Activated naive CD4-positive, alpha-beta T cell treated with anti-CD3 and anti-CD28 coated beads, Interleukin-2, amount 10 ng/mL, durations not matched to agents 7 days and 5 days (primary cell): ENCODE measurements at regions of chr12 and their contacts with region 1.

Region 1: GRCh38 chr12:103632554-103633216 is 45.6 kb downstream of the STAB2 start:
- DNase-seq: peak; percentile 80
- H3K4me3 Mint-ChIP-seq: no peak overlapping the region
- H3K27ac Mint-ChIP-seq: no peak overlapping the region
- H3K4me1 Mint-ChIP-seq: no peaks in the 10 kb centered on the region
- H3K27me3 Mint-ChIP-seq: peaks cover 9% of the 10 kb centered on the region

Region 2: DNA sequence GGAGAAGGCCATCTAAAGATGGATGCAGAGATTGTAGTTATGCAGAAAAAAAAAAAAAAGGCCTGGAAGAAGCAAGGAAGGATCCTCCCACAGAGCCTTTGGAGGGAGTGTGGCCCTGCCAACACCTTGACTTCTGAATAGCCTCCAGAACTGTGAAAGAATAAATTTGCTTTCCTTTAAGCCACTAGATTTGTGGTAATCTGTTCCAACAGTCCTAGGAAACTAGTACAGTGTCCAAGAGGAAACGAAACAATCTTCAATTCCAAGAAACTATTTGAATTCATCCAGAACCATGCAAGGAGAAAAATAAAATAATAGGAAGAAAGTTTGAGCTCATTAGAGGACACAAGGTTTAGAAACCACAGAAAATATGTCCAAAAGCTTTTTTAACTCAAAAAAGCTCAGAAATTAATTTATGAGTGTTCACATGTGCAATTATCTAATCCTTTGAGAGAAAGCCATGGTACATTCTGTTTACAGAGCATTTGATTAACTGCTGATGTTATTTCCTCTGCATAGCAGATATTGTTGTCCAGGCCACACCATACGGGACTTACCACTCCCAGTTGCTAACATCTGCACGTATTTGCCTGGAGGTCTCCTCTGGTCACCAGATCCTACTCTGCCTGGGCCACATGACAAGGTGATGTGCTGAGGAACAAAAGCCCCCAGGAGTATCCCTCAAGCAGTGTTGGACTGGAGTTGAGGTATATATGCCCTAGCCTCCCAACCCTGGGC is 75.6 kb before region 1 on chr12:
- CTCF ChIA-PET with region 1: no interaction called
- DNase-seq: no peak
- H3K4me3 Mint-ChIP-seq: no peak overlapping the region
- H3K27ac Mint-ChIP-seq: no peak overlapping the region
- H3K4me1 Mint-ChIP-seq: no peaks in the 10 kb centered on the region
- H3K27me3 Mint-ChIP-seq: peaks cover 13% of the 10 kb centered on the region

Region 3: DNA sequence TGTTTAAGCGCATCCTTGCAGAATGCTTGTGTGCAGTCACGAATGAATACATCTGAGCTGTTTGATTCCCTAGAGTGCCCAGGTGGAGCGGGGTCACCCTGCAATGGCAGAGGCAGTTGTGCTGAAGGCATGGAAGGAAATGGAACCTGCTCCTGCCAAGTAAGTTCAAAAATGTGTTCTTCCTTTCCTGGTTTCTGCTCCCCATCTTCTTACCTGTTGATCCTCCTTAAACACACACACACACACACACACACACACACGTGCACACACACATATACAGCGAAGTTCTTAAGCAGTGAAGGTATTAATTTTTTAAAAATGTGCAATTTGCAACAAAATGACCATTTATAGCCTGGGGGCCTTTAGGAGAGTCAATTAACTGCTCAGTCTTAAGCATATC is 12.3 kb before region 1 on chr12:
- CTCF ChIA-PET with region 1: interaction called, 17 read pairs
- DNase-seq: no peak
- H3K4me3 Mint-ChIP-seq: no peak overlapping the region
- H3K27ac Mint-ChIP-seq: no peak overlapping the region
- H3K4me1 Mint-ChIP-seq: no peaks in the 10 kb centered on the region
- H3K27me3 Mint-ChIP-seq: no peaks in the 10 kb centered on the region